ENCODE measurements at regions of chr9 and their contacts with region 1.

Region 1: DNA sequence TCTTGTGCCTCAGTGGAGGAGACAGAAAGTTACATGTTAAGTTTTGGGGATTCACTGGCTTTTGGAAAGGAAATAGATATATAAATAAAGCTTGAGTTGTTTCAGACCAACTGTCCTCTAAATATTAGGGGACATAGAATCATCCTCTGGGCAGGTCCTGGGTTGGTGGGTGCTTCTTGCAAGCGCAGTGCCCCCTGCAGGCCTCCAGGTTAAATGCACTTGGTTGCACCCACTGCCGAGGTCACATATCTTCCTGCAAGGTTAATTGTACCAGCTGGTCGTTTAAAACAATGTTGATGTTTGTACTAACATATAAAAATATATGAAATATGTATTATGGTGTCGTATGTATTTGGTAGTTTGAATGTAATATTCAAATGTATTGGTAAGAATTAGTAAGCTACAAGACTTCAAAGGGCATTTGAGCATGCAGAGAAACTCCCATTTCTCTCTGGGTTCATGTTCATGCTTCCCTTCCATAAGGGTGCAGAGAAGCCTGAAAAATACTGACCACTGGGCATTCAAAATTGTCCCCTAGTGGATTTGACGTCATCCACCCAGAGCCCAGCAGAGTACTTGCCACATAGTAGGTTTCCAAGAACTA is 87.0 kb downstream of the ZNF618 start:
- DNase-seq: peak; percentile 28
- ATAC-seq: peak; percentile 61
- H3K4me3 ChIP-seq: no peak overlapping the region
- H3K27ac ChIP-seq: no peak overlapping the region
- H3K4me1 ChIP-seq: peaks cover 19% of the 10 kb centered on the region
- H3K27me3 ChIP-seq: peaks cover 0 to 4% of the 10 kb centered on the region in 2 experiments; a peak in 1 of 5 replicates
- CTCF ChIP-seq: peak; percentile 51
- EP300 ChIP-seq: no peak
- POLR2A ChIP-seq: no peak
- RAD21 ChIP-seq: no peak

Region 2: GRCh38 chr9:113906411-113907110 is 56.6 kb before region 1 on chr9:
- CTCF ChIA-PET with region 1: no interaction called
- POLR2A ChIA-PET with region 1: no interaction called
- in situ Hi-C with region 1: no loop called
- intact Hi-C with region 1: no loop called
- DNase-seq: no peak
- ATAC-seq: no peak
- H3K4me3 ChIP-seq: no peak overlapping the region
- H3K27ac ChIP-seq: no peak overlapping the region
- H3K4me1 ChIP-seq: no peaks in the 10 kb centered on the region
- H3K27me3 ChIP-seq: peaks cover 0 to 15% of the 10 kb centered on the region in 2 experiments; a peak in 2 of 5 replicates
- CTCF ChIP-seq: no peak
- EP300 ChIP-seq: no peak
- POLR2A ChIP-seq: no peak
- RAD21 ChIP-seq: no peak

Region 3: GRCh38 chr9:113932906-113933584 is 30.1 kb before region 1 on chr9:
- CTCF ChIA-PET with region 1: no interaction called
- POLR2A ChIA-PET with region 1: no interaction called
- in situ Hi-C with region 1: no loop called
- intact Hi-C with region 1: no loop called
- DNase-seq: no peak
- ATAC-seq: no peak
- H3K4me3 ChIP-seq: no peak overlapping the region
- H3K27ac ChIP-seq: no peak overlapping the region
- H3K4me1 ChIP-seq: no peaks in the 10 kb centered on the region
- H3K27me3 ChIP-seq: peaks cover 2 to 9% of the 10 kb centered on the region in 2 experiments; a peak in 3 of 5 replicates
- CTCF ChIP-seq: no peak
- EP300 ChIP-seq: no peak
- POLR2A ChIP-seq: no peak
- RAD21 ChIP-seq: no peak

Region 4: DNA sequence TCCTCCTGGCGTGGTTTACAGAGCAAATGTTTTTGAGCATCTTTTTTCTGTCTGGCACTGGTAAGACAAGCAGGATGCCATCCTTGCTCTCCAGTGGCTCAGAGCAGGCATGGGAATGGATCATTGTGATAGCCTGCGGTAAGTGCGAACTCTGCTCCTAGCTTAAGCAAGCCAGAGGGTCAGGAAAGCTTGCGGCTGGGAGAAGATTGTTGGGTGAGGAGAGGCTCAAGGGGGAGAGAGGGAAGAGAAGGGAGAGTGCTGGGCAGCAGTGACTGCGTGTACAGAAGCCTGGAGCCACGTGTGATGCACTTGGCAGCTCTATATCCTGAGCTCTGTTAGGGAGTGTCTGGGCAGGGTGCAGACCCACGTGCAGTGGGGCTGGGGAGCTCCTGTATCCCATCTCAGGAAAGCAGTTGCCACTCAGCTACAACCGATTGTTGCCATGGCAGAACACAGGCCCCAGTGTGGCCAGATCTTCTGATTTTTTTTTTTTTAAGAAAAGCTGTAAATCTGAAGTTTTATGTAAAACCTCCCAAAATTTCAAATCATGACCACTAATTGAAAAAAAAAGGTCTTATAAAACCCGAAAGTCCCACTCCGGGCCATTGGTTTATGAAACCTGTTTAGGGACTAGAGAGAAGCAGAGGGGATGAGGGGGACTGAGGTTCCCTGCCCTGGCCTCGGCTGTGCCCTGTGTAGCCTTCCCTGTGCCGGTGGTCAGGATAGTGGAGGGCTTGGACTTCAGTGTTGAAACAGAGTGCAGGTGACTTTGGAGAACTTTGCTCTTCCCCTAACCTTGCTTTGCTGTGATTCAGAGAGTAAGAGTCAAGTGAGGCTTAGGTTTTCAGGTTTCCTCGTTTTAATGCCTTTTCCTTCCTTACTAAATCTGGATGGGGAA is 19.8 kb before region 1 on chr9:
- CTCF ChIA-PET with region 1: no interaction called
- POLR2A ChIA-PET with region 1: no interaction called
- in situ Hi-C with region 1: no loop called
- intact Hi-C with region 1: no loop called
- DNase-seq: no peak
- ATAC-seq: no peak
- H3K4me3 ChIP-seq: no peak overlapping the region
- H3K27ac ChIP-seq: no peak overlapping the region
- H3K4me1 ChIP-seq: no peaks in the 10 kb centered on the region
- H3K27me3 ChIP-seq: peaks cover 0 to 15% of the 10 kb centered on the region in 2 experiments; a peak in 4 of 5 replicates
- CTCF ChIP-seq: no peak
- EP300 ChIP-seq: no peak
- POLR2A ChIP-seq: no peak
- RAD21 ChIP-seq: no peak

Region 5: DNA sequence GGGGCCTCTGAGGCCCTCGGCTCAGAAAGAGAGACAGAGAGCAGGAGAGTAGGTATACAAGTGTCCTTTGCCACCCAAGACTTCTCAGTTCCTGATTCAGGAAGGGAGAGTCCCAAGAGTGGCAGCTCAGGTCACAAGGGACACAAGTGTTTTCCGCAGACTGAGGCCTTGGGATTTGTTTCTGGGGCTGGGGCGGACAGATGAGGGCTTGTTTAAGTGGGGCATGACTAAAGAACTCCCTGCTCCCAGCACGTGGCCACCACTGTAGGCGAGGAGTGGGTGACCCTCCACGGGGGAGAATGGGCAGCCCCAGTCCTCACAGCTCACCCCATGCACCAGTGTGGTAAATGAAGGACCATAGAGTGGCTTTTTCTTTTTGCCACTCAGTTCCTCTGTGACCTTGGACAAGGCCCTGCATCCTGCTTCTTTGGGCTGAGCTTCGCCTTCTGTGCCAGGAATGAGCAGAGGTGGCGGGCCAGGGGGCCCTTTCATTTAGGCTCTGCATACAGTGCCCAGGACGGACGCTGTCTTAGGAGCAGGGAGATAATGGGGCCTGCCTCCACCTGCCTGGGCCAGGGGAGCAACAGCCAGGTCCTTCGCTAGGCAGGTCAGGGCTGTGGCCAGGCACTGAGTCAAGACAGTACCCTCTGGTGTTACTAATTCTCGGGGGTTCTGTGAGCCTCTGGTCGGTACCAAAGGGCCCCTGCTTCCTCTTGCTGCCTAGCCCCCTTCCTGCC is 64.2 kb after region 1 on chr9:
- CTCF ChIA-PET with region 1: no interaction called
- POLR2A ChIA-PET with region 1: no interaction called
- in situ Hi-C with region 1: no loop called
- intact Hi-C with region 1: loop called (anchors 10 kb)
- DNase-seq: no peak
- ATAC-seq: peak; percentile 24; the same call in 1 of the 3 replicates
- H3K4me3 ChIP-seq: no peak overlapping the region
- H3K27ac ChIP-seq: no peak overlapping the region
- H3K4me1 ChIP-seq: no peaks in the 10 kb centered on the region
- H3K27me3 ChIP-seq: peaks cover 0 to 25% of the 10 kb centered on the region in 2 experiments; a peak in 2 of 5 replicates
- CTCF ChIP-seq: no peak
- EP300 ChIP-seq: no peak
- POLR2A ChIP-seq: no peak
- RAD21 ChIP-seq: no peak

Measured in HepG2 (cell line).